WTC11 (cell line): ENCODE measurements at regions of chr3 and their contacts with region 1.

Region 1: DNA sequence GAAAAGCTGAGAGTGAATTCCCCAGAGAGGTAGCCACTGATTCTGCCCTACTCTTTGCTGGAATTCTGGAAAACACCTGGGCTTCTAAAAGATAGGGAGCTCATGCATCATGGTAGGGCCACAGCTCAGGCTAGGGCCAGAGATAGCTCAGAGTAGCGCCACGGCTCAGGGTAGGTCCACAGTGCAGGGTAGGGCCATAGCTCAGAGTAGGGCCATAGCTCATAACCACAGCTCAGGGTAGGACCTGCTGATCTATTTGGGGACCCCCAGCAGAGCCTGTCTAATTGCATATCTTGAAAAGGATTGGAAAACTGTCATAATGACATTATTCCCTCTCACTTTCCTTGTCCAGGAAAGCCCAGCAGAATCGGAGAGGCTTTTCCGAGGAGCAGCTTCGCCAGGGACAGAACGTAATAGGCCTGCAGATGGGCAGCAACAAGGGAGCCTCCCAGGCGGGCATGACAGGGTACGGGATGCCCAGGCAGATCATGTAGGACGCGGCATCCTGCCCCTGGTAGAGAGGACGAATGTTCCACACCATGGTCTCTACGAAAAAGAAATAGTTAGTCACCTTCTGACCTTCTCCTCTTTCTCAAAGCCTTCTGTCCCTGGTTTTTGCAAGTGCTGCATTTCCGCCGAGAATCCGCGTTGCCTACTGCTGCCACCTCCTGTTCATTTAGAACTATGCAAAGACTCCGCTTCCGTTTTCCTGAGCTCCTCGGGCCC is 14.5 kb downstream of the TAGLN3 start:
- DNase-seq: peak; percentile 57
- ATAC-seq: peak; percentile 90
- H3K4me3 Mint-ChIP-seq: no peak overlapping the region
- H3K27ac Mint-ChIP-seq: no peak overlapping the region
- H3K4me1 Mint-ChIP-seq: peaks cover 9% of the 10 kb centered on the region; the same call in 1 of the 2 replicates
- H3K27me3 Mint-ChIP-seq: no peaks in the 10 kb centered on the region
- CTCF ChIP-seq: 0 out of 2 replicates have a peak, but pooled peaks have one; percentile 41

Region 2: DNA sequence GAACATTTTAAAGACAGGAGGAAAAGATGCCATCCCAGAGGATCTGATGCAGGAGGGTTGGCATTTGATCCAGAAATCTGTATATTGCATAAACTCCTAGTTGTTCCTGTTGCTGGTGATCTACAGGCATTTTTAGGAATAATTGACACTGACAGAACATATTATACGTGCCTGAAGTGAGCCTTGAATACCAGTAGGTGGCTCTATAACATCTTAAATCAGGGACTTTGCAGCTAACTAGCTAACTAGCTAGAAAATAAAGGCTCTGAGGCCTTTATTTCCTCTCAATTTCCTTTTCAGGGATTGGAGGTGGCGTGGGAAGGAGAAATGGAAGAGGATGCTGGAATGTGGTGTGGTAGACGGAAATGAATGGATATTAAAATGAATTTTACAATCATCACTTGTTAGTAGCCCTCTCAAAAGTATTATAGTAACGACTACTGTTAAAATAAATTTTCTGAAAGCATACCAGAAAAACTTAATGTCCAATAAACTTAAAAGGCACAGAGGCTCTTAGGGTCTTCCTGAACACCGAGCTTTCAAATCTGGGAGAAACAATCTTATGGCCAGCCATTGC is 344.2 kb before region 1 on chr3:
- CTCF ChIA-PET with region 1: interaction called, 20 read pairs
- POLR2A ChIA-PET with region 1: no interaction called
- DNase-seq: no peak
- ATAC-seq: peak; percentile 90
- H3K4me3 Mint-ChIP-seq: no peak overlapping the region
- H3K27ac Mint-ChIP-seq: no peak overlapping the region
- H3K4me1 Mint-ChIP-seq: peaks cover 9% of the 10 kb centered on the region
- H3K27me3 Mint-ChIP-seq: peaks cover 19% of the 10 kb centered on the region
- CTCF ChIP-seq: peak; percentile 47

Region 3: GRCh38 chr3:111859974-111860859 is 153.0 kb before region 1 on chr3:
- CTCF ChIA-PET with region 1: interaction called, 13 read pairs
- POLR2A ChIA-PET with region 1: interaction called, 3 read pairs
- DNase-seq: peak; percentile 84
- ATAC-seq: peak; percentile 68
- H3K4me3 Mint-ChIP-seq: peak overlapping the region; percentile 96
- H3K27ac Mint-ChIP-seq: peak overlapping the region; percentile 95
- H3K4me1 Mint-ChIP-seq: peaks cover 58% of the 10 kb centered on the region
- H3K27me3 Mint-ChIP-seq: peaks cover 23% of the 10 kb centered on the region
- CTCF ChIP-seq: no peak

Region 4: DNA sequence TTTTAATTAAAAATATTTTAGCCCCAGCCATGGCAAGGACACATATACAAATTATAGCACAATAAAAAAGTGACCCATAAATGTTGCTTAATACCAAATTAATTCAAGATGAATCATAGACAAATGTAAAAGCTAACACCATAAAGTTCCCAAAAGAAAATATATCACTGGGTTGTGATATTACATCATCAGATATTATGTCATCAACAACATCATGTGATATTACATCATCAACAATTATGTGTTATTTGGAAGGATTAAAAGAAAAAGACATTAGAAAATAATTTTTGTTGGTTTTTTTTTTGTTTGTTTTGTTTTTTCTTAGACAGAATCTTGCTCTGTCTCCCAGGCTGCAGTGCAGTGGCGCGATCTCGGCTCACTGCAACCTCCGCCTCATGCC is 68.8 kb before region 1 on chr3:
- CTCF ChIA-PET with region 1: no interaction called
- POLR2A ChIA-PET with region 1: no interaction called
- DNase-seq: no peak
- ATAC-seq: no peak
- H3K4me3 Mint-ChIP-seq: no peak overlapping the region
- H3K27ac Mint-ChIP-seq: no peak overlapping the region
- H3K4me1 Mint-ChIP-seq: no peaks in the 10 kb centered on the region
- H3K27me3 Mint-ChIP-seq: no peaks in the 10 kb centered on the region
- CTCF ChIP-seq: no peak

Region 5: DNA sequence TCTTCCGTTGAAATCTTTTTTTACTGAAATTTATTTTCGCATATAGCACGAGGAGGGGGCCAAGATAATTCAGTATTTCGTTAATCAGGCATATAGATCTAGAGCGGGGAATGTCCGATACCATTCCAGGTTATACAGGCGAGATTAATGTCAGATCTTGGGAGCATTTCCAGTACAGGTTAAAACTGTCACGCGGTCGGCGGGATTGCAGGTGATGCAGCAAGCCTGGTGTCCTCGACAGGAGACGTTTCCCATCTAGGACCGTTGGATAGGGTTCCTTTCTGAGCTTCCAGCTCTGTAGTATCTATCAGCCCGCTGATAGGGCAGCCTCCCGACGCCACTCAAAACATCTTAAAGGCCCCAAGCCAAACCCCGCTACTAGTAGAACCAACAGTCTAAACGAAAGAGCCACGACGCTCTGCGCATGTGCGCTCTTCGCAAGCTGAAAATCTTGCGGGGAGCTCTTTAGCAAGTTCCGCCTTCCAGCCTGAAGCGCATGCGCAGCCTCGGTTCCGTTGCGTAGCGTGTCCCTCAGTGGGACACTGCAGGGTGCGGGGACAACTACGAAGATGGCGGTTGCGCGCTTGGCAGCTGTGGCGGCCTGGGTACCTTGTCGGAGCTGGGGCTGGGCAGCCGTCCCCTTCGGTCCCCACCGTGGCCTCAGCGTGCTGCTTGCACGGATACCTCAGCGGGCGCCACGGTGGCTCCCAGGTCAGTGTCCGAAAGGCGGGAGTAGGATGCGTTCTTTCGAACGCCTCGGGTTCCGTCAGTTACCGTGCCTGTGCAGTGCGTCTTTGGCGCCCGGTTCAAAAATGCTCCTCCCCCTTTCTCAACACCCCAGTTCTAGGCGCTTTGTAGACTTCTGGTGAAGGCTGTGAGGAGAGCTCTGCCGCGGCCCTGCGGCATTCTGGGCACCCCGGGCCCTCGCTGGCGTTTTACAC is 34.5 kb before region 1 on chr3 and contains the start of gene ABHD10:
- CTCF ChIA-PET with region 1: interaction called, 51 read pairs
- POLR2A ChIA-PET with region 1: interaction called, 4 read pairs
- DNase-seq: peak; percentile 93
- ATAC-seq: peak; percentile 96
- H3K4me3 Mint-ChIP-seq: peak within 1 kb of the TSS; percentile 83
- H3K27ac Mint-ChIP-seq: peak within 1 kb of the TSS; percentile 88
- H3K4me1 Mint-ChIP-seq: peaks cover 13% of the 10 kb centered on the region
- H3K27me3 Mint-ChIP-seq: no peaks in the 10 kb centered on the region
- CTCF ChIP-seq: no peak
- total RNA-seq, gene ABHD10: 27.6 to 32.4 TPM (median 29.2 TPM) in 3 replicates

Region 6: GRCh38 chr3:112027142-112027541 is 13.9 kb after region 1 on chr3:
- CTCF ChIA-PET with region 1: interaction called, 19 read pairs
- POLR2A ChIA-PET with region 1: no interaction called
- DNase-seq: no peak
- ATAC-seq: no peak
- H3K4me3 Mint-ChIP-seq: no peak overlapping the region
- H3K27ac Mint-ChIP-seq: no peak overlapping the region
- H3K4me1 Mint-ChIP-seq: no peaks in the 10 kb centered on the region
- H3K27me3 Mint-ChIP-seq: no peaks in the 10 kb centered on the region
- CTCF ChIP-seq: no peak

Region 7: GRCh38 chr3:112111785-112112402 is 98.7 kb after region 1 on chr3:
- CTCF ChIA-PET with region 1: interaction called, 20 read pairs
- POLR2A ChIA-PET with region 1: no interaction called
- DNase-seq: peak; percentile 63
- ATAC-seq: peak; percentile 98
- H3K4me3 Mint-ChIP-seq: no peak overlapping the region
- H3K27ac Mint-ChIP-seq: 0 out of 2 replicates have a peak overlapping the region, but pooled peaks have one; percentile 43
- H3K4me1 Mint-ChIP-seq: peaks cover 11% of the 10 kb centered on the region
- H3K27me3 Mint-ChIP-seq: no peaks in the 10 kb centered on the region
- CTCF ChIP-seq: peak; percentile 76